IMR-90 (cell line): ENCODE measurements at regions of chr1 and their contacts with region 1.

Region 1: GRCh38 chr1:45303582-45304310 is 22.9 kb upstream of the HPDL start:
- DNase-seq: peak; percentile 96
- ATAC-seq: peak; percentile 96
- H3K4me3 ChIP-seq: peak overlapping the region; percentile 76
- H3K27ac ChIP-seq: peak overlapping the region; percentile 86
- H3K4me1 ChIP-seq: peaks cover 4% of the 10 kb centered on the region; the same call in 1 of the 2 replicates
- H3K27me3 ChIP-seq: no peaks in the 10 kb centered on the region
- CTCF ChIP-seq: peak; percentile 68
- POLR2A ChIP-seq: peak; percentile 72
- RAD21 ChIP-seq: peak; percentile 72

Region 2: DNA sequence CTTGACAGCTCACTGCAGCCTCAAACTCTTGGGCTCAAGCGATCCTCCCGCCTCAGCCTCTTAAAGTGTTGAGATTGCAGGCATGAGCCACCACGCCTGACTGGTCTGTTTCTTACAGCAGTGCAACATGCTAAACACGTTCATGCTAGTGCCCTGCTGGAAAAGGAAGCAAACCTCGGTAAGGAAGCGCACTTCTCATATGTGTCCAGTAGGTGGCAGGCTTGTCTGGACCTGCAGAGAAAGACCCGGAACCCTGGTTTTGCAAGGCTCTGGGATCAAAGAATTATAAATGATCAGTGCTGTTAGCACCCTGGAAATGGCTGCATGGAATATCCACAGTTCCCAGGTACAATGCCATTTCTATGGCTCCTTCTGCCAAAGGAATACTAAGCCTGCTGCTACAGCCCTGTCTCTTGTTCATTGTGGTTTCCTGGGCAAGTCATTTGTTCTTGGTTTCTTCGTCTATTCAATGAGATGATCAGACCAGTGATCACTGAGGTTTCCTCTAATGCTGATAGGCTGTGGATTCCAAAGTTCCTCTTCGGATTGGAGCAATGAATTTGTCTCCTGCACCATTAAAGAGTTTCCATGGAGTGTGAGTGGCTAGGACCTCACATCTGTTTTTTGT is 588.7 kb before region 1 on chr1:
- CTCF ChIA-PET with region 1: no interaction called
- POLR2A ChIA-PET with region 1: no interaction called
- dilution Hi-C with region 1: no loop called
- in situ Hi-C with region 1: no loop called
- intact Hi-C with region 1: loop called (anchors 5 kb)
- DNase-seq: peak; percentile 73
- ATAC-seq: peak; percentile 95
- H3K4me3 ChIP-seq: no peak overlapping the region
- H3K27ac ChIP-seq: no peak overlapping the region
- H3K4me1 ChIP-seq: peaks cover 5% of the 10 kb centered on the region
- H3K27me3 ChIP-seq: peaks cover 2% of the 10 kb centered on the region; the same call in 1 of the 2 replicates
- CTCF ChIP-seq: peak; percentile 84
- POLR2A ChIP-seq: no peak
- RAD21 ChIP-seq: peak; percentile 76

Region 3: DNA sequence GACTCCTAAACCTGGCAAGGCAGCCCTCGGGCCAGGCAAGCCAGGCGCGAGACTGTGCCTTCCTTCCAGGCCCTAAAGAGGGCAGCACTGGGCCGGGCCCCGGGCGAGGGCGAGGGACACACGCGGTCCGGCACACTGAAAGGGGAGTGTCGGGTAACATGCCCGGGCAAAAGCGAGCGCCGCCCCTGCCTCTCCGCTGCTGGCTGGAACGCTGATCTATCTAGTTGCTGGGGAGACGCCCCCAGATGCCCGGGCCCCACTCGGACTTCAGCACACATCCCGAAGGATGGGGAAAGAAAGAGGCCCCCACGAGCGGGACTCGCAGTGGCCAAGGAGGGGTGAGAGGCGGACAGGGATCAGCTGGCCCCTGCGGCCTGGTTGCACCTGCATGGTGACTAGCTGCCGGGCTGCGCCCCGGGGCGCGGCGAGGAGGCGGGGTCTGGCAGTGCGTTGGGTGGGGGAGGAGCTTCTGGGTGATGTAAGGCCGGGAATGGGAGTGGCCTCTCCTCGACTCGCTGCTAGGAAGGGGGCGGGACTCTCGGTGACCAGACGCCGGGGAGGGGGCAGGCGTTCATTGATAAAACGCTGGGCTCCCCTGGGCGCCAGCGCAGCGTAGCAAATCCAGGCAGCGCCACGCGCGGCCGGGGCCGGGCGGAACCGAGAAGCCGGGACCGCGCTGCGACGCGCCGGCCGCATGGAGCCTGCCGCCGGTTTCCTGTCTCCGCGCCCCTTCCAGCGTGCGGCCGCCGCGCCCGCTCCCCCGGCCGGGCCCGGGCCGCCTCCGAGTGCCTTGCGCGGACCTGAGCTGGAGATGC is 503.8 kb before region 1 on chr1 and contains the start of gene PLK3:
- CTCF ChIA-PET with region 1: interaction called, 3 read pairs
- POLR2A ChIA-PET with region 1: interaction called, 3 read pairs
- dilution Hi-C with region 1: no loop called
- in situ Hi-C with region 1: no loop called
- intact Hi-C with region 1: loop called (anchors 10 kb)
- DNase-seq: peak; percentile 98
- ATAC-seq: peak; percentile 92
- H3K4me3 ChIP-seq: peak within 1 kb of the TSS; percentile 74
- H3K27ac ChIP-seq: peak within 1 kb of the TSS; percentile 83
- H3K4me1 ChIP-seq: peaks cover 11% of the 10 kb centered on the region
- H3K27me3 ChIP-seq: no peaks in the 10 kb centered on the region
- CTCF ChIP-seq: peak; percentile 96
- POLR2A ChIP-seq: peak; percentile 99
- RAD21 ChIP-seq: peak; percentile 84
- total RNA-seq, gene PLK3: 15.3 and 15.8 TPM in 2 replicates

Region 4: GRCh38 chr1:45011837-45012638 is 291.7 kb before region 1 on chr1 and contains the start of gene UROD:
- CTCF ChIA-PET with region 1: interaction called, 53 read pairs
- POLR2A ChIA-PET with region 1: interaction called, 7 read pairs
- dilution Hi-C with region 1: no loop called
- in situ Hi-C with region 1: loop called (anchors 5 kb)
- intact Hi-C with region 1: loop called (anchors 1 kb)
- DNase-seq: peak; percentile 96
- ATAC-seq: peak; percentile 83
- H3K4me3 ChIP-seq: peak within 1 kb of the TSS; percentile 82
- H3K27ac ChIP-seq: peak within 1 kb of the TSS; percentile 53
- H3K4me1 ChIP-seq: peaks cover 12% of the 10 kb centered on the region
- H3K27me3 ChIP-seq: no peaks in the 10 kb centered on the region
- CTCF ChIP-seq: no peak
- POLR2A ChIP-seq: peak; percentile 85
- RAD21 ChIP-seq: peak; percentile 20
- total RNA-seq, gene UROD: 165 and 220 TPM in 2 replicates

Region 5: GRCh38 chr1:45205910-45206721 is 97.6 kb before region 1 on chr1 and contains the start of gene ZSWIM5:
- CTCF ChIA-PET with region 1: interaction called, 3 read pairs
- POLR2A ChIA-PET with region 1: no interaction called
- dilution Hi-C with region 1: no loop called
- in situ Hi-C with region 1: no loop called
- intact Hi-C with region 1: loop called (anchors 5 kb)
- DNase-seq: peak; percentile 42
- ATAC-seq: peak; percentile 89
- H3K4me3 ChIP-seq: peak within 1 kb of the TSS; percentile 69
- H3K27ac ChIP-seq: no peak within 1 kb of the TSS; the same call in 1 of the 2 replicates
- H3K4me1 ChIP-seq: no peaks in the 10 kb centered on the region
- H3K27me3 ChIP-seq: peaks cover 35% of the 10 kb centered on the region
- CTCF ChIP-seq: no peak
- POLR2A ChIP-seq: no peak
- RAD21 ChIP-seq: no peak
- total RNA-seq, gene ZSWIM5: under 0.01 TPM in 2 replicates